Activated CD4-positive, alpha-beta memory T cell treated with anti-CD3 and anti-CD28 coated beads, Interleukin-2, amount 10 ng/mL, durations not matched to agents 7 days and 5 days (primary cell): ENCODE measurements at regions of chr11 and their contacts with region 1.

Region 1: GRCh38 chr11:65497141-65498041 is 1.5 kb upstream of the MALAT1 start:
- DNase-seq: peak; percentile 98
- H3K4me3 Mint-ChIP-seq: no peak overlapping the region
- H3K27ac Mint-ChIP-seq: no peak overlapping the region
- H3K4me1 Mint-ChIP-seq: peaks cover 38% of the 10 kb centered on the region
- H3K27me3 Mint-ChIP-seq: no peaks in the 10 kb centered on the region

Region 2: GRCh38 chr11:65354265-65355012 is 143.0 kb before region 1 on chr11 and contains the start of gene TIGD3:
- CTCF ChIA-PET with region 1: no interaction called
- POLR2A ChIA-PET with region 1: interaction called, 19 read pairs
- DNase-seq: peak; percentile 96
- H3K4me3 Mint-ChIP-seq: peak within 1 kb of the TSS; percentile 83
- H3K27ac Mint-ChIP-seq: peak within 1 kb of the TSS; percentile 0
- H3K4me1 Mint-ChIP-seq: peaks cover 17% of the 10 kb centered on the region
- H3K27me3 Mint-ChIP-seq: peaks cover 8% of the 10 kb centered on the region
- total RNA-seq, gene TIGD3: 0.58 to 0.88 TPM

Region 3: GRCh38 chr11:65418711-65419459 is 78.5 kb before region 1 on chr11:
- CTCF ChIA-PET with region 1: interaction called, 447 read pairs
- POLR2A ChIA-PET with region 1: interaction called, 6,840 read pairs
- DNase-seq: peak; percentile 95
- H3K4me3 Mint-ChIP-seq: peak overlapping the region; percentile 97
- H3K27ac Mint-ChIP-seq: peak overlapping the region; percentile 99
- H3K4me1 Mint-ChIP-seq: peaks cover 47% of the 10 kb centered on the region
- H3K27me3 Mint-ChIP-seq: peaks cover 5% of the 10 kb centered on the region

Region 4: DNA sequence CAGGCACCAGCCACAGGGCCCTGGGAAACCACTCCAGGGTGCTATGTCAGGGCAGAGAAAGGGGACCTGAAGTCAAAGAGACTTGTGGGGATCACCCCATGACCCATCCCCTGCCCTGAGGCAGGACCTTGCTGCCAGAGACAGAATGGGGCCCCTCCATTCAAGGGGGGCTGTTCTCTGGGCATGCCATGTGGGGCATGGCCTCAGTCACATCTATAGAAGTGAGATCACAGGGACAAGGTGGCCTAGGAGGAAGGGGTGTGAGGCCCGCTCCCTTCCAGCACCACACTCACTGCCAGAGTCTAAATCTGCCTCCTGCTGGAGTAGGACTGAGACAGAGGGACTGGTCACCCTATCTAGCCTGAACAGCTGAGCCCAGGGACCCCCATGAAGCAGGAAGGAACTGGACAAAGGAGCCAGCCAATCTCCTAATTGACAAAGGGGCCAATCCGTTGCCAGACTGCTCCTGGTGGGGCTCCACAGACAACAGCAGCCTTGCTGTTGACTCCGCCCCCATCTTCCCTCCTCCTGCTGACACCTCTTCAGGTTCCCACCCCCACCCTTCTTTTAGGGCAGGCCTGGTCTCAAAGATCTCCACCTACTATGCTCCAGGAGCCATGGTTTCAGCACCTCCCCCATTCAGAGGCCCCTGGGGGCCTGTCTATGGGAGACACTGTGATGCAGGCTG is 48.8 kb before region 1 on chr11:
- CTCF ChIA-PET with region 1: no interaction called
- POLR2A ChIA-PET with region 1: interaction called, 155 read pairs
- DNase-seq: no peak
- H3K4me3 Mint-ChIP-seq: peak overlapping the region; percentile 10
- H3K27ac Mint-ChIP-seq: peak overlapping the region; percentile 55
- H3K4me1 Mint-ChIP-seq: peaks cover 8% of the 10 kb centered on the region
- H3K27me3 Mint-ChIP-seq: no peaks in the 10 kb centered on the region

Region 5: GRCh38 chr11:65477149-65477965 is 20.0 kb before region 1 on chr11:
- CTCF ChIA-PET with region 1: interaction called, 50 read pairs
- POLR2A ChIA-PET with region 1: interaction called, 1,583 read pairs
- DNase-seq: peak; percentile 92
- H3K4me3 Mint-ChIP-seq: peak overlapping the region; percentile 99
- H3K27ac Mint-ChIP-seq: peak overlapping the region; percentile 98
- H3K4me1 Mint-ChIP-seq: peaks cover 24% of the 10 kb centered on the region
- H3K27me3 Mint-ChIP-seq: peaks cover 4% of the 10 kb centered on the region

Region 6: DNA sequence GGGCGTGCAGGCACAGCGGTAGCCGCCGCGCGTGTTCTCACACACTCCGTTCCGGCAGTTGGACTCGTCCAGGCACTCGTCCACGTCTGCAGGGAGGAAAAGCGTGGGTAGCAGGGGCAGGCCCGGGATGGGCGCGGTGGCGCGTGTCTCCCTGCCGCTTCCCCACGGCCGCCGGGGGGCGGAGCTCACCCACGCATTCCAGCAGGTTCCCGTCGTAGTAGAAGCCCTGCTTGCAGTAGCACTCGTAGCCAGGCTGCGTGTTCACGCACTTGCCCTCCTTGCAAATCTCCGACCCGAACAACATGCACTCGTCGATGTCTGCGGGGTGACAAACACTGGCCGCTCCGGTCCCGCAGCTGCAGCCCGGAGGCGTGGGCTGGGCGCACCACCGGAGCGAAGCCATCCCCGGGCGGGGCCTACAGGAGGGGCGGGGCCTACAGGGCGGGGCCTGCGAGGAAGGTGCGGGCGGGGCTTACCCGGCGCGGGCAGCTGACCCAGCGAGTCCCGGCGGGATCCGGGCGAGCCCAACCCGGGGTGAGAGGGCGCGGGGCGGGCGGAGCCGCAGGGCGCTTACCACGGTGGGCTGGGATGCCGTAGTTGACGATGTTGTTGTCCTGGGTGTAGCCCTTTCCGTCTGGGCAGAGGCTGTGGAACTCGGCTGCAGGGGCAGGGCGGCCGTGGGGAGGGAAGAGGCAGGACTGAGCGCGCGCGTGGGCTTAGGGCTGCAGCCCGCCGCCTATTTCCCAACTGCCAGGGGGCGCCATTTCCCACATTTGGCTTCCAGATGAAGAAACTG is 43.1 kb after region 1 on chr11:
- CTCF ChIA-PET with region 1: no interaction called
- POLR2A ChIA-PET with region 1: interaction called, 11 read pairs
- DNase-seq: peak; percentile 92
- H3K4me3 Mint-ChIP-seq: peak overlapping the region; percentile 80
- H3K27ac Mint-ChIP-seq: peak overlapping the region; percentile 74
- H3K4me1 Mint-ChIP-seq: peaks cover 30% of the 10 kb centered on the region
- H3K27me3 Mint-ChIP-seq: no peaks in the 10 kb centered on the region

Region 7: GRCh38 chr11:65888163-65888814 is 390.9 kb after region 1 on chr11 and contains the start of gene FIBP:
- CTCF ChIA-PET with region 1: interaction called, 3 read pairs
- POLR2A ChIA-PET with region 1: interaction called, 16 read pairs
- DNase-seq: peak; percentile 98
- H3K4me3 Mint-ChIP-seq: peak within 1 kb of the TSS; percentile 97
- H3K27ac Mint-ChIP-seq: peak within 1 kb of the TSS; percentile 90
- H3K4me1 Mint-ChIP-seq: peaks cover 74% of the 10 kb centered on the region
- H3K27me3 Mint-ChIP-seq: no peaks in the 10 kb centered on the region
- total RNA-seq, gene FIBP: 71.7 to 77.4 TPM